AG04450 (cell line): ENCODE measurements at regions of chr4 and their contacts with region 1.

Region 1: DNA sequence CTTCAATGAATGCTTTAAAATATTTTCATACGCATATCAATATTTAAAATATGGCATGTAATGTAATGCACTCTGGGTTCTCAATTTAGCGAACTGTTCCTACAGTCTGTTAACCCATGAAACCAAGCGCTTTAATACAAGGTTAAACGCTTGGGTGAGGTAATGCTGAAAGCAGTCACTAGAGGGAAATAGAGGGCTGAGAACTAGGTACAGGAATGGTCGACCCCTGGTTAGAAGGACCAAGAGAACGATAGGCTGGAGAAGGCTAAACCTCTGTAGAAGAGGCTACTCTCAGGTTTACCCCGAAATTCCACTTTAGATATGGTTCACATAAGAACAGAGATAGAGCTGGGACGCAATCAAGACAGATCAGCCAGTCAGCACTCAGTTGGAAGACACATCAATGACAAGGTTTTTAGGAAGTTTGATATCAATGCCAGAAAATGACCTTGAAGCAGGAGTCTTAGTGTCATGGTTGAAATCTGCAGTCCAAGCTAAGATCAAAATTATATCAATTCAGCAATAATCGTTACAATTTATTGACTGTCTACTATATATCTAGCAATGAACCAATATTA is 26.9 kb downstream of the ARSJ start:
- DNase-seq: no peak
- H3K4me3 ChIP-seq: no peak overlapping the region
- H3K27ac ChIP-seq: no peak overlapping the region
- H3K27me3 ChIP-seq: no peaks in the 10 kb centered on the region
- CTCF ChIP-seq: peak; percentile 71

Region 2: GRCh38 chr4:114077610-114078009 is 125.1 kb after region 1 on chr4:
- CTCF ChIA-PET with region 1: no interaction called
- POLR2A ChIA-PET with region 1: no interaction called
- DNase-seq: peak; percentile 59
- H3K4me3 ChIP-seq: no peak overlapping the region
- H3K27ac ChIP-seq: peak overlapping the region; percentile 43
- H3K27me3 ChIP-seq: no peaks in the 10 kb centered on the region
- CTCF ChIP-seq: no peak

Region 3: DNA sequence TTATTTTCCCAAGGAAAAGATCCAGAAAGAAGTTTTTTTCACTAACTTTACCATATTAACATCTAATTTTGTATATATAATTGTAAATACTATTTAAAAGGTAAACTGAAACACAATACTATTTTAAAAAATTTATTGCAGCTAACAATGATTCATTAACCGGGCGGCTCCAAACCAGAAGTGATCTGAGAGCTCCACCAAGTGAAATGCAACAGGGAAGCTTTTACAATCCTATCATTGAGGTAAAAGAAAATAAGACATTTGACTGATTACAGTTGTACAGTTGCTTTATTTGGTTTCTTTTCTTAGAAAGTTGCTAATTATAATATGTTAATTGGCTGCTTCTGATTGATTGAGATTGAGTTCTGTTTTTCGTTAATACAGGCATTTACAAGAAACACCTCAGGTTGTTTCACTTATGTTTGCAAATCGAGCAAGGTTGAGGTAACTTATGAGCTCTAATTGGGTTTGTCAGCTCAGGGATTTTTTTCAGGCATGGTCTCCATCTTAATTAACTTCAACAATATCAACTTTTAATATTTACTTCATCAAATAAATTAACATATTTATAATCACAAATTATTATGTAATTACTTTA is 425.9 kb after region 1 on chr4:
- CTCF ChIA-PET with region 1: interaction called, 13 read pairs
- POLR2A ChIA-PET with region 1: no interaction called
- DNase-seq: peak; percentile 15
- H3K4me3 ChIP-seq: no peak overlapping the region
- H3K27ac ChIP-seq: no peak overlapping the region
- H3K27me3 ChIP-seq: no peaks in the 10 kb centered on the region
- CTCF ChIP-seq: peak; percentile 73